Cardiac septum (tissue), 1 donor: ENCODE measurements at regions of chr10 and their contacts with region 1.

Region 1: GRCh38 chr10:110225756-110226542 is 18.5 kb downstream of the MXI1 start:
- DNase-seq: peak; percentile 96

Region 2: DNA sequence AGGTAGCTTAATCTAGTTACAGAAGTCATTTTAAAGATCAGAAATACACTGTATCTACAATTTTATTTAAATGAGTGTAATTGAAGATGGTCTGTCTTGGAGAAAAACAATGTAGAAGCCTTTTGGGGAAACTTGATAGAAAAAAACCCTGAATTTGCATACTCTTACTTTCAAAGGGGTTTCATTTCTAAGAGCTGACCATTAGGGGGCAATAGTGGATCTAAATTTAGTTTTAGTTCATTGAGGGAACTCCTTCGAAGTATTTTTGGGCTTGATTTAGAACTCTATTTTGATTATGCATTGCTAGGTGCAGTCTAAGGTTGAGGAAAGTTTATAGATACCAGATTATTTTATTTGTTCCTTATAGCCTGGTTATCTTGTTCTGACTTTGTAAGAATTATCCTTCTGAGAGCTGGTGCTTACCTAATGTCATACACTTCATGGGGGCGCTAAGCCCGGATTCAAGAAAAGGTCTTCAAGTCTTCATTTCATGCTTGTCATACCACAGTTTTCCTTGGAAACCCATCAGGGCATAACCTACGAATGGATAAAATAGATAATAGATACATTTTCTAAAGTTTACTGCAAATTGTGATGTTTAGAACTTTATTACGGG is 87.6 kb before region 1 on chr10:
- intact Hi-C with region 1: loop called (anchors 2 kb)
- DNase-seq: no peak

Region 3: DNA sequence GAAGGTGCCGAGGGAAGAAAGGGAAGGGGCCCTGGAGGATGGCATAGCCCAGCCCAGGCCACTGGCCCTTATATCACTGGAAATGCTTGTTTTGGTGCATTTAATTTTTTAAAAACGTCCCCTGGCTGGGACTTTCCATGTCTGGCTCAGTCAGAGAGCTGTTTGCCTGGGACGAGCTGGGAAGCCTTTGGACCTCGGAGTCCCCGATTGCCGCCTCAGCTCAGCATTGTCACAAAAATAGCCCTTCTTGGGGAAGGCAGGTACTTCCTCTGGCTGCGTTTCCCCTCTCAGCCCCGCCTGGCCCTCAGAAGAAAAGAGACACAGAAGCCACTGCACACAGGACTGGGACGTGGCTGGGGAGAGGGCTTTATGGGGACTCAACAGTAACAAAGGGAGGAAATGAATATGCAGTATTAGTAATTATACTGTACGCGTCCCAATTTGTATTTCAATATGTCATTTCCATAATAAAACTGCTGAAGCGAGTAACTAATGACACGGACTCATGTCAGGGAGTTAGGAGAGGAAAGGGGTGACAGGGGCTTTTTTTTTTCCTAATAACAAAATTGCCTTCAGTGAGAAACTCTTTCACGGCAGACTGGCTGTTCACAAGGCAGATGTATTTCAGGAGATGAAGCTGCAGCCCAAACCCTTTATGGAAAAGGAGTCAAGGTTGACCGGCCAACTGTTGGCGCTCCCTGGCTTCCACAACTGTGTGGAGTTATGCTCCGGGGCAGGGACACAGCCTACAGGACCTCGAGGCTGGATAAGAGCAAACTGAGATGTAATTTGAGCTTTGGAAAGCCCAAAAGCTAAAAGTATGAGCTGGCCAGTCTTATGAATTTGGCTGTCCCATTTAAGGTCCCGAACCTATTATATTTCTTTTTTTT is 49.6 kb before region 1 on chr10:
- intact Hi-C with region 1: no loop called
- DNase-seq: peak; percentile 82

Region 4: DNA sequence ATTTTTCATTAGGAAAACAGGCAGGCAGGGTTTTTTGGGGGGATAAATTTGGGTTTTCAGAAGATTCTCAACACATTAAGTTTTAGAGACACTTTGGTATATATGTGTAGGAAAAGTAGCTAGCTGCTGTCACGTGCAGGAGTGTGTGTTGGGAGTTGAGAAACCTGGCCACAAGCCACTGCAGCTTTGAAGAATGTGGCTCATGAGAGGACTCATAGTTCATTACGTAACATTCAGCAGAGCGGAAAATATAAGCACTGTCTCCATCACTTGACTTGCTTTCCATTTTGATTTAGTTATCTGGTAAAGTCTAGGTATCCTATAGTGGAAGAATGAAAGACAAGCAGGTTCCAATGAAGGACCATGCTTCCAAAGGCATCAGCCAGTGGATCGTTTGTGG is 47.5 kb after region 1 on chr10:
- intact Hi-C with region 1: loop called (anchors 2 kb)
- DNase-seq: no peak